ENCODE measurements at regions of chr6 and their contacts with region 1.

Region 1: GRCh38 chr6:104799134-104799657 is 60.5 kb downstream of the HACE1 start:
- DNase-seq: no peak
- ATAC-seq: no peak
- H3K4me3 ChIP-seq: no peak overlapping the region
- H3K27ac ChIP-seq: no peak overlapping the region
- H3K4me1 ChIP-seq: no peaks in the 10 kb centered on the region
- H3K27me3 ChIP-seq: no peaks in the 10 kb centered on the region
- CTCF ChIP-seq: no peak
- EP300 ChIP-seq: no peak
- POLR2A ChIP-seq: no peak
- RAD21 ChIP-seq: no peak

Region 2: DNA sequence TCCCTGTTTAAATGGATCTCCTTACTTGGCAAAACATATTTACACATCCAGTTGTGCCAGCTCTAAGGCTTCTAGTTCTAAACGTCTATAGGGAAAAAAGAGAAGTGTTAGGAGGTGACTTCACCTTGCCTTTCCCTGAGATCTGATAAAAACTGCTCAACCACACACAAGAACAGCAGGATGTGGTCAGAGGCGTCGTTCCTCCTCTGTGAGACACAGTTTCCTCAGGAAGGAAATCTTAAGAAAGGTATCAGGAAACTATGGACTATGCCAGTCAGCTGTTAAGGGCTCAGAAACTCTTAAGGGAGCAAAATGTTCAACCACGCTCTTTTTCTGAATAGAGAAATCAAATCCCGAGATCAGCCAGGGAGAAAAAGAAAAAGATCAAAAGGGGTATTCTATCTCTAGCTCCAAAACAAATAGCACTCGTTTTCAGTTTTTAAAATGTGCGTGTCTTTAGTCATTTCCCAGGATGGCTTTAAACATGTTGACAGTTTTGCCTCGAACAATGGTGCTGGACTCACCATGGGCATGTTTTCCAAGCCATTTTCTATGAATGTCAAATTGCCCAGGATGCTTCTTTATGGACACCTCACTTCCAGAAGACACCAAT is 94.0 kb before region 1 on chr6:
- CTCF ChIA-PET with region 1: no interaction called
- POLR2A ChIA-PET with region 1: no interaction called
- RAD21 ChIA-PET with region 1: no interaction called
- SMC1A ChIA-PET with region 1: no interaction called
- in situ Hi-C with region 1: no loop called
- intact Hi-C with region 1: no loop called
- DNase-seq: no peak
- ATAC-seq: no peak
- H3K4me3 ChIP-seq: no peak overlapping the region
- H3K27ac ChIP-seq: no peak overlapping the region
- H3K4me1 ChIP-seq: no peaks in the 10 kb centered on the region
- H3K27me3 ChIP-seq: no peaks in the 10 kb centered on the region
- CTCF ChIP-seq: no peak
- EP300 ChIP-seq: no peak
- POLR2A ChIP-seq: no peak
- RAD21 ChIP-seq: no peak

Region 3: GRCh38 chr6:104736545-104736944 is 62.7 kb before region 1 on chr6:
- CTCF ChIA-PET with region 1: no interaction called
- POLR2A ChIA-PET with region 1: interaction called, 10 read pairs
- RAD21 ChIA-PET with region 1: no interaction called
- SMC1A ChIA-PET with region 1: no interaction called
- in situ Hi-C with region 1: no loop called
- intact Hi-C with region 1: no loop called
- DNase-seq: no peak
- ATAC-seq: no peak
- H3K4me3 ChIP-seq: no peak overlapping the region
- H3K27ac ChIP-seq: no peak overlapping the region
- H3K4me1 ChIP-seq: no peaks in the 10 kb centered on the region
- H3K27me3 ChIP-seq: no peaks in the 10 kb centered on the region
- CTCF ChIP-seq: no peak
- EP300 ChIP-seq: no peak
- POLR2A ChIP-seq: no peak
- RAD21 ChIP-seq: no peak